Activated CD8-positive, alpha-beta T cell treated with anti-CD3 and anti-CD28 coated beads, Interleukin-2, amount 10 ng/mL, durations not matched to agents 7 days and 5 days (primary cell): ENCODE measurements at regions of chr17 and their contacts with region 1.

Region 1: GRCh38 chr17:51056813-51057510 is 63.7 kb downstream of the SPAG9 start:
- DNase-seq: peak; percentile 54
- ATAC-seq: peak; percentile 57
- H3K4me3 Mint-ChIP-seq: no peak overlapping the region
- H3K27ac Mint-ChIP-seq: no peak overlapping the region
- H3K4me1 Mint-ChIP-seq: peaks cover 6% of the 10 kb centered on the region
- H3K27me3 Mint-ChIP-seq: no peaks in the 10 kb centered on the region

Region 2: DNA sequence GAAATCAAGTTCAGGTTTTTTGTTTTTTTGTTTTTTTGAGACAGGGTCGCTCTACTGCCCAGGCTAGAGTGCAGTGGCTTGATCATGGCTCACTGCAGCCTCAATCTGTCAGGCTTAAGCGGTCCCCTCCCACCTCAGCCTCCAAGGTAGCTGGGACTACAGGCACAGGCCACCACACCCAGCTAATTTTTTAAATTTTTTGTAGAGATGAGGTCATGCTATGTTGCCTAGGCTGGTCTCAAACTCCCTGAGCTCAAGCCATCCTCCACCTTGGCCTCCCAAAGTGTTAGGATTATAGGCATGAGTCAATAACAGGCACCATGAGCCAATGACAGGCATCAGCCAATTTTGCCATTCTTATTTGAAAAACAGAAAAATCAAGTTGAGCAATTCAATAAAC is 61.3 kb before region 1 on chr17:
- CTCF ChIA-PET with region 1: interaction called, 95 read pairs
- POLR2A ChIA-PET with region 1: no interaction called
- DNase-seq: no peak
- ATAC-seq: no peak
- H3K4me3 Mint-ChIP-seq: no peak overlapping the region
- H3K27ac Mint-ChIP-seq: no peak overlapping the region
- H3K4me1 Mint-ChIP-seq: no peaks in the 10 kb centered on the region
- H3K27me3 Mint-ChIP-seq: no peaks in the 10 kb centered on the region

Region 3: DNA sequence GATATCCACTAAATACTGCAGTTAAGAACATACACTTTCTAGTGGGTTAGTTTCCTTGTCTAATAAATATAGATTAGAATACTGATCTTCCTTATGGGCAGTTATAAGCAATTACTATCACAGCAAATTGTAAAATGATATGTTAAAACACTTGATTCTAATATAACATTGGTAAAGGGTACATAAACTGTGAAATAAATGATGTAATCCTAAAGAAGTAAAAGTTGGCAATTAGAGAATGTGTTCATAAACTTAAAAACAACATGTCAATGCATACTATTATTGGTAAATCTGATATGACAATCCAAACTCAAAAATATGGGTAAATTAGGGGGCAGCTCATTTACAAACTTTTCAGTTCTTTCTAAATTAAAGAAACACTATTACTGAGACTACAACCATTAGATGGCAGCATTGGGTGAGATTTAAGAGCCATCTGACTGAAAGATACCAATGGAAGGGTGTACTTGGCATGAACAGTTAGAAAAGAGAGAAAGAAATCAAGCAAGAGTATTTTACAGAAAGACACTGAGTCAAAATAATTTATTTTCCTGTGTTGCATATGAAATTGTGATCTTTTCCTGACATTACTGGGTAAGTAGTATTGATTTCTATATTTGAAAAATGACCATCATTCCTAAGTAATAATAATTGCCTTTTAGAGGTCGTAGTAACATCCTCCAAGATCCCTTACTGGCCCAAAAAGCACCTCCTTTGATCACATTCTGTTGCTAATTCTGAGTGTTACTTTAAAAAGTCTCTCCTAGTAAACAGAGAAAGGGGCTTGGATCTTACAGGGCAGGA is 55.9 kb before region 1 on chr17:
- CTCF ChIA-PET with region 1: interaction called, 95 read pairs
- POLR2A ChIA-PET with region 1: no interaction called
- DNase-seq: peak; percentile 47
- ATAC-seq: peak; percentile 71
- H3K4me3 Mint-ChIP-seq: no peak overlapping the region
- H3K27ac Mint-ChIP-seq: no peak overlapping the region
- H3K4me1 Mint-ChIP-seq: no peaks in the 10 kb centered on the region
- H3K27me3 Mint-ChIP-seq: no peaks in the 10 kb centered on the region

Region 4: DNA sequence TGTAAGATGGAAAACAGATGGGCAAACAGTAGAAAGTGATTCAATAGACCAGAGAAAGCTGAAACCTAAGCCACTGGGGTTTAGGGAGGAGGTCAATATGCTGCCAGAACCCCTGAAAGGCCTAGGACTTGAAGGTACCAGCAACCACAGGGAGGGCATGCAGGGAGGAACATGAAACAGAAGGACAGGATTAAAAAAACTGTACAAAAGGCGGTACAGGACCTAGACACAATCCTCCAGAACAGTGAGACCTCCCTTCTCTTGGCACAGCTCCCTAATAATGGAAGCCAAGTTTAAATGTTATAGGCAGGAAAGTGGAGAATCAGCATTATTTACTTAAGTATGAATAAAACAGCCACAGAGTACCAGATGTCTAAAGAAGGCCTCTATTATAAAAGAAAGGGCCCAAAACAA is 41.8 kb before region 1 on chr17:
- CTCF ChIA-PET with region 1: interaction called, 10 read pairs
- POLR2A ChIA-PET with region 1: no interaction called
- DNase-seq: no peak
- ATAC-seq: no peak
- H3K4me3 Mint-ChIP-seq: no peak overlapping the region
- H3K27ac Mint-ChIP-seq: no peak overlapping the region
- H3K4me1 Mint-ChIP-seq: no peaks in the 10 kb centered on the region
- H3K27me3 Mint-ChIP-seq: no peaks in the 10 kb centered on the region

Region 5: DNA sequence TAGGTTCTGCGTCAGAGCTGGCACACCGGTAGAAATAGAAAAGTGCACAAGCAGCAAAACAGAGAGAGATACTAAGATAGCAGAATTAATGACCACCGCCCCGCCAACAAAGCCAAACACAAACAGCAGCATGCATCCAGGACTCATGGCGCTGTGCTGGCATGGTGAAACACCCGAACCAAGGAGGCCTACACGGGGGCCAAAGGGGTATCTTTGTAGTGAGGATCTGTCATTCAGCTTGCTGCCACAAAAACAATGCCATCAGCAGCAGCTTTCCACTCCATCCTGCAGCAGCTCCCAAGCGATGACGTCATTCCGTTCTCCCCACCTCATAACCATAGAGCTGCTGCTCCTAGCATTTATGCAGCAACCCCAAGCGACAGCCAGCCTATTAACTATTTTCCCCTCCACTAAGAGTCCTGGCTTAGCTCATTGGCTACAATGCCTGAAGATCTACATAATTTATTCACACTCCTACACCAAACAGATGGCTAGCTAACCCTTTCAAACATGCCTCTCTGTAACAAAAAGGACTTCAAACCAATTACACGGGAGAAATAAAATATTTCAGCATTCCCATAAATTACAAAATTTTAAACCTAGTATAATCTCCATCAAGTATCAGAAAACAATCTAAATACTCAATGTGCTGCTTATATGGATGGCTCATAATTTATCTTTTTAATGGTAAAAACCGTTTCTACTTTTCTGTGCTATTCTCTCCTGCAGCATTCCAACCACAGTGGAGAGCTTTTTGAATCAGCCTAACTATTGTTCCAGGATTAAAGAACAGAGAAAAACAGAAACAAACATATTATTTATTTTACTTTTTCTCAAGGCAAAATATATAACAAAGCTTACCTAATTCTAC is 10.2 kb before region 1 on chr17:
- CTCF ChIA-PET with region 1: interaction called, 30 read pairs
- POLR2A ChIA-PET with region 1: no interaction called
- DNase-seq: no peak
- ATAC-seq: no peak
- H3K4me3 Mint-ChIP-seq: no peak overlapping the region
- H3K27ac Mint-ChIP-seq: no peak overlapping the region
- H3K4me1 Mint-ChIP-seq: no peaks in the 10 kb centered on the region
- H3K27me3 Mint-ChIP-seq: no peaks in the 10 kb centered on the region

Region 6: DNA sequence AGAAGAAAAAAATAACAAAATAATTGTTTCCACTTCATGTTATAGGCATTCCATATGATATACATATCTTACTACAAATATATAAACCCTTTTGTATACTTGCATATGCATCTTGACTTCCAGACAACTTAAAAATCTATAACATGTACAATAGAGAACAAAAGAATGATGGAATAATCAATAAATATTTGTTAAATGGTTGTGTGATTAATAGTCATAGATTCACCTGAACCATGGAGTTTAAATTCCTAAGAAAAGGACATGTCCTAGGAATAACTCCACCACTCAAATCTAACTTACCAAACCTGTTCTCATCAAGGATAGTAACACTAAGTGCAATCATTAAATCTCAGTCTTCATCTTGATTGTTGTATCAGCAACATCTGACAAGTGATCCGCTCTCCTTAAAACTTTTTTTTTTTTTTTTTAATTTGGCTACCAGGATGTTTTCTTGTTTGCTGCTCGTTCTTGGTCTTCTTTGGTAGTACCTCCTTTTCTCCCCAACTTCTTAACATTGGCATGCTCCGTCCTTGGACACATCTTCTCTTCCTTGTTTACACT is 23.0 kb after region 1 on chr17:
- CTCF ChIA-PET with region 1: no interaction called
- POLR2A ChIA-PET with region 1: no interaction called
- DNase-seq: no peak
- ATAC-seq: no peak
- H3K4me3 Mint-ChIP-seq: no peak overlapping the region
- H3K27ac Mint-ChIP-seq: no peak overlapping the region
- H3K4me1 Mint-ChIP-seq: no peaks in the 10 kb centered on the region
- H3K27me3 Mint-ChIP-seq: no peaks in the 10 kb centered on the region